Keratinocyte (primary cell): ENCODE measurements at regions of chr3 and their contacts with region 1.

Region 1: DNA sequence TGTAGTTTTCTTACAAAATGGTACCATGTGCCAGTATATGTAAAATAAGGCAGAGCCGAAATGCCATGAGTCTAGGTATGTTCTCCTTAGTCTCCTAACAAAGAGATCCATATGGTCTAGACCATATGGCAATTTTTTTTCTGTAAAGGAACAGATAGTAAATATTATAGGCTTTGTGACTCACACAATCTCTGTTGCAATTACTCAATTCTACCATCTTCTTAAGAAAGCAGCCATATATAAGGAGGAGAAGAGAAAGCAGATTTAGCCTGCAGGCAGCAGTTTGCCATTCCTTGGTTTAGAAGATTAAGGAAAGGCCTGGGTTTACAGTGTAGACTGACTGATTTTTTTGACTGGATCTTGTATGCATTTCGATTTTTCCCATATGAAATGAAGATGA is 16.3 kb upstream of the BBX start:
- DNase-seq: no peak
- H3K4me3 ChIP-seq: no peak overlapping the region
- H3K27ac ChIP-seq: no peak overlapping the region
- H3K4me1 ChIP-seq: no peaks in the 10 kb centered on the region
- H3K27me3 ChIP-seq: no peaks in the 10 kb centered on the region
- CTCF ChIP-seq: no peak

Region 2: DNA sequence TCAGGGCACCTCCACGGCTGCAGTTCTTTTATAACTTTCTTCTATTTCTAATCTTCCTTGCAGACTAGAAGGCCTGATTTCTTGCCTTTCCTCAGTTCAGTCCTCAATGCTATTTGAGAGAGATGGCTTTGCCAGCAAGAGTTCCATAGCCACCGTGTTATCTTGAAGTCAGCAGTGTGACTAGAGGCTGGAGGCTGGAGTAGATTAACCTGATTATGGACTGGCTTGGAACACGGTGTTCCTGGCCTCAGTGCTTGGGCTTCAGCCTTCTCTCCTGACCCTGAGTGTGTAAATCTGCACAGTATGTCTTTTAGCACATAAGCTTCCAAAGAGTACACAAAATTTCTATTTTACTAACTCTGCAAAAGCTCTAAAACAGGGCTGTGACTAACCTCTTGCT is 67.8 kb before region 1 on chr3:
- dilution Hi-C with region 1: no loop called
- DNase-seq: no peak
- H3K4me3 ChIP-seq: no peak overlapping the region
- H3K27ac ChIP-seq: no peak overlapping the region
- H3K4me1 ChIP-seq: no peaks in the 10 kb centered on the region
- H3K27me3 ChIP-seq: no peaks in the 10 kb centered on the region
- CTCF ChIP-seq: no peak

Region 3: DNA sequence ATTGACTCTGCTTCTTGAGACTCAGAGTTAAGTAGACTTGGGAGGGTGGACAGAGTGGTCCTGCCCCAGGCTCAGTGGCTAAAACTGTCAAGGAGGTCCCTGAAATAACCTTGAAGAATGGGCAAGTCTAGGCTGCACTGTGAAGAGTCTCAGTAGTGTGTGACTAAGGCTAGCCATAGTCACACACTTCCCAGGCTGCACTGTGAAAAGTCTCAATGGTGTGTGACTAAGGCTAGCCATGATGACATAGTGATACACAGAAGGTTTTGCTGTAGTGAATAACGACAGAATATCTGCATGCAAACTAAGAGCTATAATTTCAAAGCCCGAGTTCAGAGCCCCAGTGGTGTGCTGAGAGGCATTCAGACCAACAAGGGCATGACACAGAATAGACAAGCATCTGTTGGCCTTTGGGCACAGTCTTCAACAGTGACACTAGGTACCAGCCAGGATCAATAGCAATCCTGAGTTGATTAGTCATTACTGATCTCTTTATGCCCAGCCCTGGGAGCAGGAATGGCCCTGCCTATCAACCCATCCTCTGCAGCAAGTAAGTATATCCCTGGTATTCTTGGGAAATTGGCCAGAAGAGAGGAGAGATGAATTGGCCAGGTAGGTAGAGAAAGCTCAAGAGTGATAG is 56.1 kb before region 1 on chr3:
- dilution Hi-C with region 1: loop called (anchors 5 kb)
- DNase-seq: no peak
- H3K4me3 ChIP-seq: no peak overlapping the region
- H3K27ac ChIP-seq: no peak overlapping the region
- H3K4me1 ChIP-seq: no peaks in the 10 kb centered on the region
- H3K27me3 ChIP-seq: no peaks in the 10 kb centered on the region
- CTCF ChIP-seq: no peak